Heart right ventricle (tissue), 16 donors: ENCODE measurements at regions of chr17 and their contacts with region 1.

Region 1: DNA sequence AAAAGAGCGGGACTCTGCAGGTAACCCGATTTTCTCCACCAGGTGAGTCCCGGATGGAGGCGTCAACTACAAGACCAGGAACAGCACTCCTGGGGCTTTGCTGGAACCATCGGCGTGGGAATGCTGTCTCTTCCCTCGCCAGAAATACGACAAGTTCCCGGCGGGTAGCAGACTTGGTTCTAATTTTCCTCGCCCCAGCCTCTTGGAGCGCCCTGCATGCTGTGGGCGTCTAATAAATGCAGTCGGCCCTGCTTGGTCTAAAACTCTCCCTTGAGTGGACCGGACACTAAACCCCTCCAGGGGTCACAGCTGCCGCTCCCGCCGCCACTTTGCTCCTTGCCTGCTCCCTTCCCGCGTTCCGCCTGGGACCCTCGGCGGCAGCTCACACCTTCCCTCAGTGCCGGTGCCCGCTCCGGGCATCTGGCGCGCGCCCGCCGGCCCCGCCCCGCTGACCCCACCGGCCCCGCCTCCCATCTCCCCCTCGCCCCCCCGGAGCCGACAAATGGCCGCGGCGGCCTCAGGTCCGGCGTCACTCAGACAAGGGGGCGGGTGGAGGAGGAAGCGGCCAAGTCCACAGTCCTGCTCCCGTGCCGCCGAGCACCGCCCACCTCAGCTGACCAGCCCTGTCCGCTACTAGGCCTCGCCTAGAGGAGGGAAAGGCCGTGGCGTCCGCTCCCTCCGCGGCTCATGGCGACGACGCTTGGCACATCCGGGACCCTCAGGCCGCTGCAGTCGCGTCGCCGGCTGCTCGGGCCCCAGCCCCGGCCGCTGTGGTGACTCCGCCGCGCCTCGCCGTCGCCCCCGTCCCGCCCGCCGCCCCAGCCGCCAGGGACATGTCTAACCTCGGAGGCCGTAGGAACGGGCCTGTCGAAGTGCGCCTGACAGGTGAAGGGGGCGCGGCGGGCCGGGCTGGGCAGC is 65.8 kb downstream of the KPNA2 start:
- DNase-seq: peak; percentile 92 to 94
- ATAC-seq: peak; percentile 98 to 100 (median 99)
- H3K4me3 ChIP-seq: peak overlapping the region; percentile 69 to 93 (median 82)
- H3K27ac ChIP-seq: peak overlapping the region; percentile 84 to 97 (median 94)
- H3K4me1 ChIP-seq: peaks cover 0 to 33% (median 18%) of the 10 kb centered on the region in 9 donors
- H3K27me3 ChIP-seq: no peaks in the 10 kb centered on the region
- CTCF ChIP-seq: no peak

Region 2: DNA sequence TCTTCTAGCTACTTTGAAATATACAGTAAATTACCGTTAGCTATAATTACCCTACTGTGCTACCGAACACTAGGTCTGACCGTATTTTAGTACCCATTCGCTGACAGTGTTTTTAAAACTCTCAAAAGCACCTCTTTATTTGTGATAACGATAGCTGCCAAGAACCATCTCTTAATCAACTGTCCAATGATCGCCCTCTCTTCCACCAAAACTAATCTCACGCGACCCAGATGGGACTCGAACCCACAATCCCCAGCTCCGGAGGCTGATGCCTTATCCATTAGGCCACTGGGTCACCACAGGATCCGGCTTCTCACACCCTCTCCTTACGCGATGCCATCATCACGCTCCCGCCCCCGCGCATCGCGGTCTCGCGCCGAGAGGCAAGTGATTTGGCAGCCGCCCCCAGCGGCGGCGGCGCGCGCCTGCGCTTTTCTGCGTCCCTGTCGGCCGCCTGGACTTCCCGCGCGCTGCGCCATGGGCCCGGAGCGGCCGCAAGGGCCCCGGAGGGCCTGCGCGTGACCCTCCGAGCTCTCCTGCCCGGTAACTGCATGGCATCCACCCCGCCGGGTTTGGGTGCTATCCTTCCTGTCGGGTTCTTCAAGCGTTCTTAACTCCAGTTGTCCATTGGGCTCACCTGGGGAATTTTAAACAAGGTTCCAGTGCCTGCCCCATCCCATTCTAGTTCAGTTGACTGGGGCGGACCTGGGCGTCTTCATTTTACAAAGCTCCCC is 81.5 kb before region 1 on chr17:
- intact Hi-C with region 1: loop called in 1 of 10 experiments (anchors 10 kb)
- DNase-seq: peak; percentile 97
- ATAC-seq: peak; percentile 95 to 98 (median 96)
- H3K4me3 ChIP-seq: peak overlapping the region; percentile 39 to 78 (median 61)
- H3K27ac ChIP-seq: peak overlapping the region; percentile 80 to 93 (median 84)
- H3K4me1 ChIP-seq: peaks cover 0 to 9% (median 6%) of the 10 kb centered on the region in 9 donors
- H3K27me3 ChIP-seq: no peaks in the 10 kb centered on the region
- CTCF ChIP-seq: peak; percentile 31 to 61 (median 47)

Region 3: DNA sequence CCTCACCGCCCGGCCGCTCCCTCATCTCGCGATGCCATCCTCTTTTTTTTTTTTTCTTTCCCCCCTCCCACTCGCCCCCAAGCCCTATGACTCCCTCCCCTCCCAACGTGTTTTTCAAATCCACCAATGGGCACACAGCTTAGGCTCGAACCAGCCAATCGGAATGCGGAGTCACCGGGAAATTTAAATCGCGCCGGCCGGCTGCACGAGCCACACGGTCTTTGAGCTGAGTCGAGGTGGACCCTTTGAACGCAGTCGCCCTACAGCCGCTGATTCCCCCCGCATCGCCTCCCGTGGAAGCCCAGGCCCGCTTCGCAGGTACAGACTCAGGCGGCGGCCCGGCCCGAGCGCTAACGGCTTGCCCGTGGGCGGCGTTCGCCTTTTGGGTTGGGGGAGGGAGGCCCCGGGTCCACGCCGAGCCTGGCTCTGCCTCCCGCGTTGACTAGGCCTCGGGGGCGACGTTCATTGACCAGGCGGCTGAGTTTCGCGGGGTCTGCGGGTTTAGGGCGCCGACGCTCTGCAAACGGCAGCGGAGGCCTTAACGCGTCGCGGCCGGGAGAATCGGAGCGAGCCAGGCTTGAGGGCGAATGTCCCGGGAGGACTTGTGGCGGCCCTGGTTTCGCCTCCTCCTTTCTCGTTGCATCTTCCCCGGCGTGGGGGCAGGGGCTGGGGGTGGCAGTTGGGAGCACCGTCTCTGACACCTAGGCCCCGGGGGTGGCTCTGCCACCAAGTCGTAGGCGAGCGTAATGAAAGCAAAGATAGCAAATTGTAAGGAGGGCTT is 65.6 kb before region 1 on chr17 and contains the start of gene KPNA2:
- intact Hi-C with region 1: loop called in 2 of 10 experiments (anchors 5 to 10 kb)
- DNase-seq: peak; percentile 92 to 96
- ATAC-seq: peak; percentile 96 to 98 (median 97)
- H3K4me3 ChIP-seq: peak within 1 kb of the TSS; percentile 82 to 100 (median 98)
- H3K27ac ChIP-seq: peak within 1 kb of the TSS; percentile 50 to 91 (median 86)
- H3K4me1 ChIP-seq: peaks cover 0 to 27% (median 20%) of the 10 kb centered on the region in 9 donors
- H3K27me3 ChIP-seq: no peaks in the 10 kb centered on the region
- CTCF ChIP-seq: no peak
- total RNA-seq, gene KPNA2: 12.6 to 33.3 (median 18.8) TPM

Region 4: DNA sequence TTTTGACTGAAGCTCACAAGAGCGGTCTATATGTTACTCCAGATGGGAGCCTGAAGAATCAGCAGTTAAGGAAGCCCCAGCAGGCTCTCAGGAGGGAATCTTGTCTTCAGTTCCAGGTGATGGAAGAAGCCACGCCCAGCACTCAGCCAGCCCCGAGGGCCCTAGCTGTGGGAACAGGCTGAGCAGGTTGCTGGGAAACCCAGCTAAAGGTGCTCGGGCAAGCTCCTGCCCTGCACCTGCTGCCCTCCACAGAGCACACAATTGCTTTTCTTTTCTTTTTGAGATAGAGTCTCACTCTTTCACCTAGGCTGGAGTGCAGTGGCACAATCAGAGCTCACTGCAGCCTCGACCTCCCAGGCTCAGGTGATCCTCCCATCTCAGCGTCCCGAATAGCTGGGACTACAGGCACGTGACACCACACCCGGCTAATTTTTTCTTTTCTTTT is 323.6 kb after region 1 on chr17:
- intact Hi-C with region 1: loop called in 1 of 10 experiments (anchors 5 kb)
- DNase-seq: no peak
- ATAC-seq: no peak
- H3K4me3 ChIP-seq: no peak overlapping the region
- H3K27ac ChIP-seq: no peak overlapping the region
- H3K4me1 ChIP-seq: no peaks in the 10 kb centered on the region
- H3K27me3 ChIP-seq: no peaks in the 10 kb centered on the region
- CTCF ChIP-seq: no peak